ENCODE measurements at regions of chr1 and their contacts with region 1.

Region 1: GRCh38 chr1:154974063-154974807 is at the start of gene CKS1B:
- DNase-seq: peak; percentile 99
- H3K4me3 Mint-ChIP-seq: no peak within 1 kb of the TSS
- H3K27ac Mint-ChIP-seq: no peak within 1 kb of the TSS
- H3K4me1 Mint-ChIP-seq: peaks cover 32% of the 10 kb centered on the region
- H3K27me3 Mint-ChIP-seq: no peaks in the 10 kb centered on the region
- total RNA-seq, gene CKS1B: 283 to 291 TPM

Region 2: GRCh38 chr1:154955718-154956543 is 18.3 kb before region 1 on chr1 and contains the start of gene PBXIP1:
- CTCF ChIA-PET with region 1: interaction called, 13 read pairs
- intact Hi-C with region 1: loop called (anchors 1 kb)
- DNase-seq: peak; percentile 88
- H3K4me3 Mint-ChIP-seq: peak within 1 kb of the TSS; percentile 91
- H3K27ac Mint-ChIP-seq: peak within 1 kb of the TSS; percentile 96
- H3K4me1 Mint-ChIP-seq: peaks cover 74% of the 10 kb centered on the region
- H3K27me3 Mint-ChIP-seq: no peaks in the 10 kb centered on the region
- total RNA-seq, gene PBXIP1: 55.3 to 55.5 TPM

Region 3: DNA sequence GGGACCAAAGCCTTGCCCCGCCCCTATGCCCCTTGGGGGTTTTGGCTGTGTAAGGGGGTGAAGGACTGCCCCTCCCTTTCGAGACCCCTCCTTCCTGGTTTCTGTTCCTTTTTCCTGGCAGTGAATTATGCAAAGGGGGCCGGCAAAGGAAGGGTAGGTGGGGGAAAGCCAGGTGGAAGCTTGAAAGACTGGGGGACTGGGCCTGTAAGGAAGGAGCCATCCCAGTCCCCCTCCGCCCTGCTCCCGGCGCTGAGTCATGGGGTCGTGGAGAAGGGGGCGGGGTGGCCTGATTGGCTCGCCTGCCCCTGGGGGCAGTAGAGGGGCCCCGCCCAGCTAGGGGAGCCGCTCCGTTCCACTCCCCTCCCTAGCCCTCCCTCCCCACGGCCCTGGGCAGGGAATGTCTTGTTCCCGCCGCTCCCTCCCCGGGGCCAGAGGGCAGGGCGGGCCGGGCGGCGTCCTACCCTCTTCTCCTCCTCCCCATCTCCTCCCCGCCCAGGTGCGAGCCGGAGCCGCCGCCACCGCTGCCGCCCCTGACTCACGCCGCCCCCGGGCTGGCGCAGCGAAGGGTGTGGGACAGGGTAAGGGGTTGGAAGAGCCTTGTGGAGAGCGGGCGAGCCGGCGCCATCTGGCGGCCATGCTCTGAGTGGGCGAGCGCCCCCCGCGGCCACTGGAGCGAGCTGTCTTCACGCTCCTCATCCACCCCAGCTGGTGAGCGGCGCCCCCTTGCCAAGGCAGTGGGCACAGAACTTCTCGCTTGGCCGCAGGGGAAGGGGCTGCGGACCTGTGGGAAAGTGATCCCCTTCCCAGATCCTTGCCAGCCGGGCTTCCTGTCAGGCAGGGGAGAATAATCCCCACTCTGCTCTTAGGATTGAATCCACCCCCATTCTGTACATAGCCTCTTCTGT is 43.1 kb after region 1 on chr1:
- CTCF ChIA-PET with region 1: interaction called, 5 read pairs
- intact Hi-C with region 1: loop called (anchors 1 kb)
- DNase-seq: peak; percentile 94
- H3K4me3 Mint-ChIP-seq: peak overlapping the region; percentile 56
- H3K27ac Mint-ChIP-seq: peak overlapping the region; percentile 85
- H3K4me1 Mint-ChIP-seq: peaks cover 65% of the 10 kb centered on the region
- H3K27me3 Mint-ChIP-seq: no peaks in the 10 kb centered on the region

Region 4: DNA sequence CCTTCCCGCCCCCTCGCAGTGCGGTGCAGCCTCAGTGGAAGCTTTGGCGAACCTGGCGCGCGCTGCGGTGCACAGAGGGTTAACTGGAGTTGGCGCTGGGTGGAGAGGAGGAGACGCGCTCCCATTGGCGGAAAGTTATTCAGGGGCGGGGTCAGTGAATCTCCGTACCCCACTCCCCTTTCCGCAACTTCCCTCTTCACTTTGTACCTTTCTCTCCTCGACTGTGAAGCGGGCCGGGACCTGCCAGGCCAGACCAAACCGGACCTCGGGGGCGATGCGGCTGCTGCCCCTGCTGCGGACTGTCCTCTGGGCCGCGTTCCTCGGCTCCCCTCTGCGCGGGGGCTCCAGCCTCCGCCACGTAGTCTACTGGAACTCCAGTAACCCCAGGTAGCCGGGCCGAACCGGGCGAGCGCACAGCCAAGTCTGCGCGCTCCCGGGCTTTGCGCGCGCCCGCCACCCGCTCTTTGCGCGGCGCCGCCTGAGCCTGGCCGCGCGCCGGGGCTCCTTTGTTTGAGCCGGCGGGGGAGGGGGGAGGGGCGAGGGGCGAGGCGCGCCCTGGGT is 89.4 kb after region 1 on chr1 and contains the start of gene EFNA4:
- CTCF ChIA-PET with region 1: interaction called, 3 read pairs
- intact Hi-C with region 1: loop called (anchors 1 kb)
- DNase-seq: peak; percentile 89
- H3K4me3 Mint-ChIP-seq: peak within 1 kb of the TSS; percentile 86
- H3K27ac Mint-ChIP-seq: no peak within 1 kb of the TSS
- H3K4me1 Mint-ChIP-seq: peaks cover 30% of the 10 kb centered on the region
- H3K27me3 Mint-ChIP-seq: no peaks in the 10 kb centered on the region
- total RNA-seq, gene EFNA4: 3.3 to 4.5 TPM

Region 5: DNA sequence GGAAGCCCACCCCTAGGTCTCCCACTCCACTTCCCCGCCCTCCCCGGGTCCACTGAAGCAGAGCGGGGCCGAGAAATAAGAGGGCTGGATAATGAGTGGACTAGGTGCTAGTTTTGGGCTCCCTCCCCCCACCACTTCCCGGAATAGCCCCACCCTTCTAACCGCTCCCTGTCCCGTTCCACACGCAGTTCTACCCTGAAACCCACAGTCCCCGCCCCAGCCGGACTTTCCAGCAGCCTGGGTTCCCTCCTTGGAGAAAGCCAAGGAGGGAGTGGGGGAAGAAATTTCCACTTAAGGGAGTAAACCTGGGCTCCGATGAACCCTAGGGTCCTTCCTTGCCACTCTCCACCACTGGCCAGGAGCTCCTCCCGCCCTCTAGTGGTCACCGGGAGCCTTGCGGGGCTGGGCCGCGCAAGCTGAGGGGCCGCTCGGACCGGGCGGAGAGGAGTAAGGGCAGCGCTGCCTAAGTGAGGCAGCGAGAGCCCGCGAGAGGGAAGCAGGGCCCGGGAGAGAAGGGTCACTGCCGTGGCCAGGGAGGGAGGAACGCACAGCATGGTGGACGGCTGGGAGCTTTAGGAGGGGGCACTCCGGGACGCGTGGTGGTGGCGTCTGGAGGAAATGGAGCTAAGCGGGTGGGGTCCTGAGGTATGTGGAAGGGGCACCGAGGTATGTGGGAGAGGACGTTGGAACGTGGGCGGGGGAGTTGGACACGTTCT is 219.2 kb after region 1 on chr1:
- CTCF ChIA-PET with region 1: no interaction called
- intact Hi-C with region 1: loop called (anchors 5 kb)
- DNase-seq: peak; percentile 86
- H3K4me3 Mint-ChIP-seq: peak overlapping the region; percentile 93
- H3K27ac Mint-ChIP-seq: peak overlapping the region; percentile 96
- H3K4me1 Mint-ChIP-seq: peaks cover 27% of the 10 kb centered on the region
- H3K27me3 Mint-ChIP-seq: no peaks in the 10 kb centered on the region